A549 (cell line): ENCODE measurements at regions of chr9 and their contacts with region 1.

Region 1: DNA sequence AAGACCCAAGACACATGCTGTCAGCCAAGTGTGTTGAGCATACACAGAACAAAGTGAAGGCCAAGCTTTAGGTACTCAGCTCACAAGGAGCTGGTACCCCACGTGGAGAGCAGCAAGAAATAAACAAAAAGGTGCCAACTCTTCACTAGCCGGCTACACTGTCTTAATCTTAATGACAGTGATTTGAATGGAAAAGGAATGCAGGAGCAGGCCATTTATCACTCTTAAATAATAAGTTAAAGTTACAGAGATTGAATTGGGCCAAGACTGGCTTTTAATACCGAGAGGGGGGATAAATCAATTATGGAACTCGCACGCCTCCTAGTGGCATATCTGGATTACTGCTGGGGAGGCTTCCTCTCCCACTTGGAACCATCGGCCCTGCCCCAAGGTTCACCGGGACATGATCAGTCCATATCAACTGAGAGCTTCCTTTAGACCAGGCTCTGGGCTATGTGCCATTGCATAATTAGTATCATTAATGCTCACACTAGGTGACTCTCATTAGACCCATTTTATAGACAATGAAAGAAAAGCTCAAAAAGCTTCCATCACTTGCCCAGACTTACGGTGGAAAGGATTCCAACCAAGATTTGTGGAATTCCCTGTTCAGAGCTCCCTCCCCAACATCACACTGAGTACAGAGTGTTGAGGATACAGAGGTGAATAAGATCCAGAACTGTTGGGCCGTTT is 94.0 kb downstream of the ACTL7B start:
- DNase-seq: peak; percentile 50 to 85
- ATAC-seq: peak; percentile 70 to 93
- H3K4me3 ChIP-seq: no peak overlapping the region
- H3K27ac ChIP-seq: peak overlapping the region; percentile 12 to 25; a peak in 2 of 6 replicates
- H3K4me1 ChIP-seq: no peaks in the 10 kb centered on the region
- CTCF ChIP-seq: peak; percentile 91
- EP300 ChIP-seq: no peak
- POLR2A ChIP-seq: no peak
- RAD21 ChIP-seq: peak; percentile 93 to 96

Region 2: DNA sequence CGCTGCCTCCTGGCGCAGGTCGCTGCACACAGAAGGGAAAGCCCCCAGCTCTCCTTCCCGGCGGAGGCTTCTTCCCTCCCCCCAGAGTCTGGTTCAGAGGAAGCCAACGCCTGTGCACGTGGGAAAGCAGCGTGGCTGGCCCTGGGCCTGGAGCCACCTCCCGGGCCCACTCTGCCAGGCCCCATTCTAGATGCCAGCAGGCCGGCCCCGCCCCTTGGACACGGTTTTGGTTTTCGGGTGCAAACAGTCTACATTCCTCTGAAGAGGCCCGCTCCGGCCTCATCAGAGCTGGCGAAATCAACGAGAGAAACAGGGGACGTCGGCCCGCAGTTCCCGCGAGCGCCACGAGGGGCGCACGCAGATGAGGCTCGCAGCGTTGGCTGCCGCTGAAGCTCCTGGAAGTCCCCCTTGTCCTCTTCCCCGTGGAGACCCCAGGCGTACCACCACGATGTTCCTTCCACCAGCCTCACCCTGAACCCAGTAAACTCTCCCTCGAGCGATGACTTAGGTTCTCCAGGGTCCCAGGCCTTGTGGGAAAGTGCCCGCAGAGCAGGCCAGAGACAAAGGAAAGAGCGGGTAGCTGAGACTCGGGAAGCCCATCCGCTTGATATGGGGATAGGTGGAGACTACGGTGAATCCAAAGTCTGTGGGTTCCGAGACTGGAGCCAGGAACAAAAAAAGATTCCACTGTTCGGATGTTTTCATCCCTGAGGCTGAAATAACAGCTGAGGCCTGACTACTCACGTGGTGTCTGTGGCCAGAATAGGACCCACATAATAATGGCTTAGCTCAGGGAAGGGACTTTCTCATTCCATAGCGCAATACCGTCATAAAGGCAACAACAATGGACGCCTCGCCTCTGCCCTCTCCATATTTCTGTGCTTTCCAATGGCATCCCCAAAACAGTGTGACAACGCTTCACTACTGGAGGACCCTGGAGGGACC is 1336.4 kb before region 1 on chr9:
- CTCF ChIA-PET with region 1: interaction called, 19 read pairs
- POLR2A ChIA-PET with region 1: no interaction called
- DNase-seq: peak; percentile 48 to 72
- ATAC-seq: peak; percentile 82 to 86
- H3K4me3 ChIP-seq: peak overlapping the region; percentile 26
- H3K27ac ChIP-seq: peak overlapping the region; percentile 78 to 89
- H3K4me1 ChIP-seq: peaks cover 5% of the 10 kb centered on the region; the same call in 2 of the 3 replicates
- CTCF ChIP-seq: peak; percentile 71
- EP300 ChIP-seq: no peak
- POLR2A ChIP-seq: no peak
- RAD21 ChIP-seq: peak; percentile 43 to 47; a peak in 4 of 5 replicates

Region 3: GRCh38 chr9:107489687-107490605 is 1271.9 kb before region 1 on chr9 and contains the start of gene KLF4:
- CTCF ChIA-PET with region 1: interaction called, 14 read pairs
- POLR2A ChIA-PET with region 1: no interaction called
- DNase-seq: peak; percentile 79 to 95
- ATAC-seq: peak; percentile 81
- H3K4me3 ChIP-seq: peak within 1 kb of the TSS; percentile 53
- H3K27ac ChIP-seq: peak within 1 kb of the TSS; percentile 90 to 91
- H3K4me1 ChIP-seq: peaks cover 25% of the 10 kb centered on the region
- CTCF ChIP-seq: no peak
- EP300 ChIP-seq: peak in 1 of 2 experiments; percentile 67; a peak in 1 of 5 replicates
- POLR2A ChIP-seq: peak; percentile 59
- RAD21 ChIP-seq: peak; percentile 9 to 56; a peak in 3 of 5 replicates
- polyA plus RNA-seq, gene KLF4: 8.3 and 10.1 TPM in 2 replicates

Region 4: GRCh38 chr9:108565651-108566378 is 196.0 kb before region 1 on chr9:
- CTCF ChIA-PET with region 1: interaction called, 25 read pairs
- POLR2A ChIA-PET with region 1: no interaction called
- DNase-seq: peak; percentile 82 to 83
- ATAC-seq: peak; percentile 95 to 99
- H3K4me3 ChIP-seq: no peak overlapping the region
- H3K27ac ChIP-seq: peak overlapping the region; percentile 25 to 29; a peak in 2 of 6 replicates
- H3K4me1 ChIP-seq: peaks cover 14% of the 10 kb centered on the region; the same call in 1 of the 3 replicates
- CTCF ChIP-seq: peak; percentile 92
- EP300 ChIP-seq: no peak
- POLR2A ChIP-seq: no peak
- RAD21 ChIP-seq: peak; percentile 98

Region 5: DNA sequence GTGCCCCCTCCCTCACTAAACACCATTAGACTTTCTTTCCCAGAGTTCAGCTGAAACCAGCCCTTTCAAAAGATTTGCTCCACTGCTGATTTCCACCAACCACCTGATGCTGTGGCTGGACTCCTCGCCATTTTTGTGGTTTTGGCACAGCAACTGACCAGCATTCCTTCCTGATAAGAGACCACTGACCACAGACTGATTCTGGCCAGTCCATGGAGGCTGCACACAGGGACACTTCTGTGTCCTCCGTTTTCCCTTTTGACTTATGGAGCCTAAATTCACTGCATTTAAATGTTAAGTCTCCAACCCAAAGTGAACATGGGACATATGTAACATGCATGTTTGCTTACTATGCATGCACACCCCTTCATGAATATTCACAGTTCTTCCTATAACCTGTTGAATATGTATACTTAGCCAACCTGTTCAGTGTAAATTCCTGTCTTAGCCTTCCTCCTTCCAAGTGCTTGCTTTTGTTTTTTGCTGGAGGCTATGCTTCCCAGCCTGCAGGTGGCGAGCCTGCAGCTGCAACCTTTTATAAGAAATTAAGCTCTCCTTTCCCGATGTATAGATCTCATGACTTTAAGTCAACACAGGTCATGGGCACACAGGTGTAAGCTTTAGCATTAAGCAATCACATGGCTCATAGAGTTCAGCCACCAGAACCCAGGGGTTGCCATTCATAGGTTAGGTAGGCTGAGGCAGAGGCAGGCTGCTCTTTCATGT is 15.3 kb after region 1 on chr9:
- CTCF ChIA-PET with region 1: interaction called, 26 read pairs
- POLR2A ChIA-PET with region 1: no interaction called
- DNase-seq: no peak
- ATAC-seq: no peak
- H3K4me3 ChIP-seq: no peak overlapping the region
- H3K27ac ChIP-seq: no peak overlapping the region
- H3K4me1 ChIP-seq: peaks cover 6% of the 10 kb centered on the region; the same call in 1 of the 3 replicates
- CTCF ChIP-seq: 0 out of 3 replicates have a peak, but pooled peaks have one; percentile 13
- EP300 ChIP-seq: no peak
- POLR2A ChIP-seq: no peak
- RAD21 ChIP-seq: peak in 1 of 2 experiments; percentile 30; a peak in 2 of 5 replicates

Region 6: GRCh38 chr9:109110326-109111021 is 348.7 kb after region 1 on chr9:
- CTCF ChIA-PET with region 1: no interaction called
- POLR2A ChIA-PET with region 1: no interaction called
- DNase-seq: peak in 1 of 2 experiments; percentile 62
- ATAC-seq: peak; percentile 62 to 66
- H3K4me3 ChIP-seq: peak overlapping the region; percentile 30; the same call in 2 of the 3 replicates
- H3K27ac ChIP-seq: peak overlapping the region; percentile 79 to 80
- H3K4me1 ChIP-seq: peaks cover 89% of the 10 kb centered on the region
- CTCF ChIP-seq: no peak
- EP300 ChIP-seq: no peak
- POLR2A ChIP-seq: no peak
- RAD21 ChIP-seq: no peak